ENCODE measurements at regions of chr11 and their contacts with region 1.

Region 1: GRCh38 chr11:12281571-12282478 is 95.5 kb upstream of the PARVA start:
- DNase-seq: peak; percentile 86 to 94
- ATAC-seq: peak; percentile 84
- H3K4me3 ChIP-seq: no peak overlapping the region
- H3K27ac ChIP-seq: no peak overlapping the region
- H3K4me1 ChIP-seq: no peaks in the 10 kb centered on the region
- H3K27me3 ChIP-seq: no peaks in the 10 kb centered on the region

Region 2: DNA sequence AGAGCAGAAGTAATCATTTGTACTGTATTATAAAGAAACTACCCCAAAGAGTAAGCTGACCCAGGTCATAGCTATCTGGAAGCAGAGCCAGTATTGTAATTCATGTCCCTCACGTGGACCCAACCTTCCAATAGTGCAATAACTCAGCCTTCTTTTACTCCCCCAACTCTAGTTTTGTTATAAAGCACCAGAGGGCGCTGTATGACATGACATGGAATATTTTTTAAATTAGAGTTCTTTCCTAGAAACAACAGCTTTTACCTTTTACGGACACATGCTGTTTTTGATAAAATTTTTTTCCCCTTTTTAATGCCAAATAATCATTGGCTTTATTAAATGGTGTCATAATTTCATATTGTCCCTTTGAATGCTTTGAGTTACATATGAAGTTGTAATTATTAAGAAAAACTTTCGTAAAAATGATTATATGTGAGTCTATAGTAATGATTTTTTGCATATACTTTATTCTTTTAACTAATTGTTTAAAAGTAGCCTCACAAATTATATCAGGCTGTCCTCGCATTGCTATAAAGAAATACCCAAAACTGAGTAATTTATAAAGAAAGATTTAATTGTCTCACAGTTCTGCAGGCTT is 350.3 kb before region 1 on chr11:
- intact Hi-C with region 1: loop called (anchors 5 to 10 kb)
- DNase-seq: no peak
- ATAC-seq: no peak
- H3K4me3 ChIP-seq: no peak overlapping the region
- H3K27ac ChIP-seq: no peak overlapping the region
- H3K4me1 ChIP-seq: no peaks in the 10 kb centered on the region
- H3K27me3 ChIP-seq: no peaks in the 10 kb centered on the region

Region 3: GRCh38 chr11:12043959-12044819 is 237.6 kb before region 1 on chr11:
- intact Hi-C with region 1: loop called (anchors 1 kb)
- DNase-seq: peak; percentile 85 to 93
- ATAC-seq: peak; percentile 94
- H3K4me3 ChIP-seq: no peak overlapping the region
- H3K27ac ChIP-seq: peak overlapping the region in 1 of 2 donors; percentile 60
- H3K4me1 ChIP-seq: no peaks in the 10 kb centered on the region
- H3K27me3 ChIP-seq: no peaks in the 10 kb centered on the region

Region 4: DNA sequence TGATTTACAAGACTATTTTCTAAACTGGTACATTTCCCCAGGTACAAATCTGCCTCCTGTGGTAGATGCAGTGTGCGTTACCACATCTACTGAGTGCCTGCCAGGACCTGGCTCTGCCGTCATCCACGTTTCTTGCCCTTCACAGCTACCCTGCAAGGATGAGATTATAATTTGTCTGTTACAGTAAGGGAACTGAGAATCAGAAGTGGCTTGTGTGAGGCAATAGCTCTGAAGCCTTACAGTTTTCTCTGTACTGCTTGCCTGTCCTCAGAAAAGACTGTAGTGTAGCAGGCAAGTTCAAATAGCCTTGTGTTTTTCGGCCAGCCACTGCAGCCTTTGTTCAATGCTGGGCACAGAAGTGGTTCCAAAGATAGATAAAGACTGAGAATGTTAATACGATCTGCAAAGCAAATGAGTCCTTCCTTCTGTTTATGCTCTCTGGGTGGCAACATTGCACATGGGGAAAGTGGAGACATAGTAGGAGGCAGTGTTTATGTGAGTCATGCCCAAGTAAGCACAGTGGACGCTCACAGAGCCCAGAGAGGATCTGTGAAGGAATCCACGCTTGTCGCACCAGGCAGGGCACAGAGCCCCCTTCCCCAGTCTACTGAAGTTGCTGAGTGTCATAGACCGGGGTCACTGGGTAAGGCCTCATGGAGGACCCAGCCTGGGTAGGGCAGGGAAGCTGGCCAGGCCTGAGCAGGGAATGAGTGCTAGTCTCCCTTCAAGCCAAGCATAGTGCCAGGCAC is 122.3 kb before region 1 on chr11:
- intact Hi-C with region 1: loop called in 1 of 2 experiments (anchors 5 kb)
- DNase-seq: peak in 1 of 2 donors; percentile 62
- ATAC-seq: no peak
- H3K4me3 ChIP-seq: no peak overlapping the region
- H3K27ac ChIP-seq: peak overlapping the region; percentile 83 to 84
- H3K4me1 ChIP-seq: peaks cover 7 to 35% of the 10 kb centered on the region in 2 donors
- H3K27me3 ChIP-seq: no peaks in the 10 kb centered on the region

Region 5: DNA sequence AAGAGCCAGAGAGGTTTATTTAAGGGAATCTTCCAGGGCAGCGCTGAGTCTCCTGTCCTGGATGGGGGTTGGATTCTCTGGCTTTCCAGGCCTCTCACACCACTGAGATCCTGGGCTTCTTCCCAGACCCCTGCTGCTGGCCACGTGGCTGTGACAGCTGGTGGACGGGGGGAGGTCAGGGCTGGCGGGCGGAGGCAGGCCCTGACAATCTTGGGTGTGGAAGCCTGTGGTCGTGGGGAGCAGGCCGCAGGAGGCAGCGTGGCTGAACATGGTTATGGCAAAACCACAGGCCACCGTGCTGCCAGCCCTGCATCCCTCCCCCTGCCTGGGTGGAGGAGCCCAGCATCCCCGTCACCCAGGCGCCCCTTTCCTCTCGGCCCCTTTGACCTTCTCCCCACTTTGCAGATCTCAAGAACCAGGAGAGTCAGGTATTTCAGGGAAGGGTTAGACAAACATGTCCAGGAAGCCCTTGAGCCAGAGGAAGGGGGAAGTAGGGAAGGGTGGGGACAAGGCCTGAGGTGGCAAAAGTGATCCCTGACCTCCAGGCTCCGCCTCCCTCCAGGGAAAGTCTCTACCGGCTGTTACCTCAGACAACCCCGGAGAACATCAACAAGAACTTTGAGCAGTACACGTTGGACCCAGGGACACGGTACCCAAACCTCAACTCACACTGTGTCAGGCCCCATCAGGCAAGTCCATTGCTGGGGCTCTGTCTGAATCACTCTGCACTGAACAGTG is 59.6 kb before region 1 on chr11:
- intact Hi-C with region 1: no loop called
- DNase-seq: no peak
- ATAC-seq: no peak
- H3K4me3 ChIP-seq: no peak overlapping the region
- H3K27ac ChIP-seq: peak overlapping the region; percentile 30 to 35
- H3K4me1 ChIP-seq: peaks cover 2 to 4% of the 10 kb centered on the region in 2 donors
- H3K27me3 ChIP-seq: no peaks in the 10 kb centered on the region

Measured in aorta (tissue), 5 donors.